Activated naive CD4-positive, alpha-beta T cell treated with anti-CD3 and anti-CD28 coated beads for 36 hours (primary cell): ENCODE measurements at regions of chr6 and their contacts with region 1.

Region 1: GRCh38 chr6:32894080-32895005 is 40.4 kb downstream of the PSMB9 start:
- DNase-seq: peak; percentile 97
- H3K4me3 Mint-ChIP-seq: peak overlapping the region; percentile 97
- H3K27ac Mint-ChIP-seq: peak overlapping the region; percentile 96
- H3K4me1 Mint-ChIP-seq: peaks cover 37% of the 10 kb centered on the region
- H3K27me3 Mint-ChIP-seq: no peaks in the 10 kb centered on the region

Region 2: DNA sequence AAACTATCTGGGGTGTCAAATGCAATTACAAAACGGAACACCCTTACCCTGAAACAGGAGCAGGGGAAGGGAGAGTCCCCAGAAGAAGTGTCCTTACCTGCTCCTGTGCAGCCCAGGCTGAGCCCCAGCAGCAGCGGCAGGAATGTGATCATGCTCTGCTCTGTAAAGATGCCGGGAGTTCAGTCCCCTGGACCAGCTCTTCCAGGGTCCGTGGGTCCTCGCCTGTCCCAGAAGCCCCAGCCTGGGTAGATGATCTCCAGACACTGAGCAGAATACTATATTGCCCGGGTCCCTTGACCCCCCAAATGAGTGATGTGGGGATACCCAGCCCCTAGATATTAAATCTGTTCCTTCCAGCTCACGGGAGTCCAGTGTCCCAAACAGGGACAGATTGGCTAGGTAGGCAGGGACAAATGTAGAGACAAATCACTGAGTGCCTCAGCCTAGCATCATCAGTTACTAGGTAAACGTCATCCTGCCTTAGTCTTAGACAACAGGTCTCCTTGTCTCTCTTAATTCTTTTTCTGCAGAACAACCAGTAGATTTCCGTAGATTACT is 46.4 kb after region 1 on chr6 and contains the start of gene HLA-DMB:
- CTCF ChIA-PET with region 1: no interaction called
- intact Hi-C with region 1: loop called (anchors 1 kb)
- DNase-seq: peak; percentile 65
- H3K4me3 Mint-ChIP-seq: peak within 1 kb of the TSS; percentile 79
- H3K27ac Mint-ChIP-seq: peak within 1 kb of the TSS; percentile 78
- H3K4me1 Mint-ChIP-seq: peaks cover 57% of the 10 kb centered on the region
- H3K27me3 Mint-ChIP-seq: no peaks in the 10 kb centered on the region
- total RNA-seq, gene HLA-DMB: 0.76 to 1.3 TPM